Psoas muscle (tissue), 8 donors: ENCODE measurements at regions of chr19 and their contacts with region 1.

Region 1: DNA sequence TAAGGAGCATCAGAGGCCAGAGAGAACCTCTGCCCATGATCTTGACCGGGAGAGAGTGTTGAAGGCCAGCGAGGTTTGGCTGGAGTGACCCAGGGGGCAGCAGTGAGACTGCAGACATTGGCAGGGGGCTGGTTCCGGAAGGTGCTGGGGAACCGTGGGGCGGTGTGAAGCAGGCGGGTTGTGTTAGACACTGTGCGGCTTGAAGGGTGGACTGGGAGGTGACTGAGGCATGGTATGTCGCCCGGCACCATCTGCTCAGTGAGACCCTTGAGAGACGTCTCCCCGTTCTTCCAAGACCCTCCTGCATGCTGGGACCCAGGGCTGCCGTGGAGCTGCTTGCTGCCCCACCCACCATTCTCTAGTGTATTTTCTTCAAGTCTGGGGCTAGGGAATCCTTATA is 24.6 kb downstream of the CARM1 start:
- DNase-seq: no peak
- ATAC-seq: peak in 1 of 4 donors; percentile 11
- H3K4me3 ChIP-seq: peak overlapping the region; percentile 53
- H3K27ac ChIP-seq: peak overlapping the region; percentile 91
- H3K4me1 ChIP-seq: peaks cover 94% of the 10 kb centered on the region
- H3K27me3 ChIP-seq: no peaks in the 10 kb centered on the region
- CTCF ChIP-seq: peak; percentile 25

Region 2: GRCh38 chr19:10543420-10544241 is 352.3 kb before region 1 on chr19 and contains the start of gene ATG4D:
- intact Hi-C with region 1: no loop called
- DNase-seq: peak; percentile 79 to 89
- ATAC-seq: peak; percentile 89 to 94 (median 92)
- H3K4me3 ChIP-seq: peak within 1 kb of the TSS; percentile 81
- H3K27ac ChIP-seq: peak within 1 kb of the TSS; percentile 85
- H3K4me1 ChIP-seq: peaks cover 11% of the 10 kb centered on the region
- H3K27me3 ChIP-seq: no peaks in the 10 kb centered on the region
- CTCF ChIP-seq: no peak
- total RNA-seq, gene ATG4D: 42.5 to 71.8 (median 60.8) TPM

Region 3: GRCh38 chr19:10662384-10663251 is 233.3 kb before region 1 on chr19:
- intact Hi-C with region 1: no loop called
- DNase-seq: no peak
- ATAC-seq: peak in 1 of 4 donors; percentile 5
- H3K4me3 ChIP-seq: no peak overlapping the region
- H3K27ac ChIP-seq: no peak overlapping the region
- H3K4me1 ChIP-seq: peaks cover 41% of the 10 kb centered on the region
- H3K27me3 ChIP-seq: no peaks in the 10 kb centered on the region
- CTCF ChIP-seq: no peak

Region 4: DNA sequence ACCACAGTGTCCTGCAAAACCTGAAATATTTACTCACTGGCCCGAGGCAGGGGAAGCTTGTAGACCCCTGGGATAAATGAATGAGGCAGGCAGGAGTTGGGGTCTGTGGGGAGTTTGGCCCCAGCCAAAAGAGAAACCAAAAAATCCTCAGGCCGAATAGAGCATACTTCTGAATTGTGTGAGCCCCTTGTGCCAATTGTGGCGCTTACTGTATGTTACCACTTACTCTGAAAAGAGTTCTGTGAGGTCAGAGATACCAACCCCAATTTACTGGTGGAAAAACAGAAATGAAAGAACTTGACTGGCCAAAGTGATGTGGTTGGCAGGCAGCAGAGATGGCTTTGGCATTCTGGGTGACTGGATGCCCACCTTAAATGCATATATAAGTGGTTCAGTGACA is 17.7 kb before region 1 on chr19:
- intact Hi-C with region 1: loop called in 1 of 2 experiments (anchors 2 kb)
- DNase-seq: no peak
- ATAC-seq: no peak
- H3K4me3 ChIP-seq: no peak overlapping the region
- H3K27ac ChIP-seq: peak overlapping the region; percentile 96
- H3K4me1 ChIP-seq: peaks cover 78% of the 10 kb centered on the region
- H3K27me3 ChIP-seq: no peaks in the 10 kb centered on the region
- CTCF ChIP-seq: no peak